ENCODE measurements at regions of chr7 and their contacts with region 1.

Region 1: DNA sequence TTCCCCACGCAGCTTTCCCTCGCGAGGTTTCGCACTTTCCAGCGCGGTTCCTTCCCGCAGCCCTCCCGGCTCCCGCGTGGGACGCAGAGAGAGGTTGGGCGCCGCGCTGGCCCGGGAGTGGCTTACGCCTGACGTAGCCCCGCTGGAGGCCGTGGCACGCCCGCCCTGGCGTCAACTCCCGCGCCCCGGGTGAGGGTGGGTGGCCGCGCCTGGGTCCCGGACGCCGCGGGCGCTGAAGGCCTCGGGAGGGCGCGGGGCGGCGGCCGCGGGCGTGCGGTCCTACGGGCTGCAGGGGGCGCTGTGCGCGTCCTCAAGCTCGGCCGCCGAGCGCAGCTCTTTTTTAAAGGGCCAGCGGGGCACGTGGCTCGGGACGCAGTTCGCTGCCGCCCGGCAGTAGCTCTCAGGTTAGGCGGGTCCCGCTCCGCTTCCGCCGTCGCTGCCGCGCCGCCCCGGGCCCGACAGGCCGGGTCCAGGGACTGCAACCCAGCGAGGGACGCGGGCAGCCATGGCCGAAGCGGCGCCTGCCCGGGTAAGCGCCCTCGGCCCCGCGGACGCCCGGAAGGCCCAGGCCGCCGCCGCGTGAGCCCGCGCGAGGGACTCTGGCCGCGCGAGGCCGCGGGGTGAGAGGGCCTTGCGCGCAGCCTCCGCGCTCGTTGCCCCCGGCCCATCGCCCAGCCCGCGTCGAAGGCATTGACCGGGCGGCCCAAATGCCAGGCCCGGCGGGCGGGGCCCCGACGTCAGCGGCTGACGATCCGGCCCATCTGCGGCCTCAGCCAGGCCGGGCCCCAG is at the start of gene ZNF783:
- DNase-seq: peak; percentile 86 to 94
- ATAC-seq: peak; percentile 90 to 94
- H3K4me3 ChIP-seq: peak within 1 kb of the TSS; percentile 57
- H3K27ac ChIP-seq: peak within 1 kb of the TSS; percentile 88 to 95
- H3K4me1 ChIP-seq: peaks cover 15% of the 10 kb centered on the region; the same call in 2 of the 3 replicates
- CTCF ChIP-seq: peak; percentile 92
- EP300 ChIP-seq: no peak
- POLR2A ChIP-seq: peak; percentile 47
- RAD21 ChIP-seq: peak; percentile 36 to 50; a peak in 4 of 5 replicates
- polyA plus RNA-seq, gene ZNF783: 8.0 and 9.9 TPM in 2 replicates

Region 2: DNA sequence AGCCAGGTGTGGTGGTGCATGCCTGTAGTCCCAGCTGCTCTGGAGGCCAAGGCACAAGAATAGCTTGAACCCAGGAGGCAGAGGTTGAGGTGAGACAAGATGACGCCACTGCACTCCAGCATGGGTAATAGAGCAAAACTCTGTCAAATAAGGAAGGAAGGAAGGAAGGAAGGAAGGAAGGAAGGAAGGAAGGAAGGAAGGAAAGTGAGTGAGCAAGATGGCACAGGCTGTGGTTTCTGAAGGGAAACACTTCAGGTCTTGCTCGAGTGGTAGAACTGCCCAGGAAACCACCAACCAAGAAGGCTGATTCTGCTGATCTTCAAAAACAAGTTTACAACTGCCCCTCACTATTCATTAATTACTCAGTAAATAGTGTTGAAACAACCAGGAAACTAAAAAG is 423.1 kb before region 1 on chr7:
- CTCF ChIA-PET with region 1: no interaction called
- POLR2A ChIA-PET with region 1: no interaction called
- DNase-seq: no peak
- ATAC-seq: no peak
- H3K4me3 ChIP-seq: no peak overlapping the region
- H3K27ac ChIP-seq: no peak overlapping the region
- H3K4me1 ChIP-seq: peaks cover 10% of the 10 kb centered on the region
- CTCF ChIP-seq: no peak
- EP300 ChIP-seq: no peak
- POLR2A ChIP-seq: no peak
- RAD21 ChIP-seq: no peak

Region 3: DNA sequence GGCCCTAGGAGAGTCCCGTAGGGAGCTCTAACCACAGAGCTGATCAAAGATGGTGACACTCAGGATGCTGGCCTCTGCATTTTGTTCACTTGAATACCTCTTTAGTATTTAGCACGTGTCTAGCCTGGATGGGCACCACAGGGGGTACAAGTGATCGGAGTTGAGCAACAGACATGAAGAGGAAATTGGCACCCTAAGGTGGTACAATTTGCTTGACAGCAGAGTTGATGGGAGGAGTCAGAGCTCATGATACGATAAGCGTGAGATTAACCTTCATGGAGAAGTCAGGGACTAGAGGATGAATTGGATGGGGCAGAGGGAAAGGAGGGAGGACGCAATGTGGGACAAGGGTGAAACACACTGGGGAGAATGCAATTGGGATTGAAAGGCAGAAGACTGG is 32.5 kb before region 1 on chr7:
- CTCF ChIA-PET with region 1: interaction called, 11 read pairs
- POLR2A ChIA-PET with region 1: interaction called, 4 read pairs
- DNase-seq: no peak
- ATAC-seq: peak; percentile 8 to 18; a peak in 3 of 6 replicates
- H3K4me3 ChIP-seq: no peak overlapping the region
- H3K27ac ChIP-seq: no peak overlapping the region
- H3K4me1 ChIP-seq: peaks cover 9% of the 10 kb centered on the region
- CTCF ChIP-seq: no peak
- EP300 ChIP-seq: no peak
- POLR2A ChIP-seq: no peak
- RAD21 ChIP-seq: no peak

Region 4: GRCh38 chr7:149239345-149240191 is 22.5 kb before region 1 on chr7 and contains the start of gene ZNF212:
- CTCF ChIA-PET with region 1: interaction called, 13 read pairs
- POLR2A ChIA-PET with region 1: interaction called, 4 read pairs
- DNase-seq: peak; percentile 93 to 99
- ATAC-seq: peak; percentile 99 to 100
- H3K4me3 ChIP-seq: peak within 1 kb of the TSS; percentile 74
- H3K27ac ChIP-seq: peak within 1 kb of the TSS; percentile 79 to 93
- H3K4me1 ChIP-seq: peaks cover 22% of the 10 kb centered on the region
- CTCF ChIP-seq: peak; percentile 77
- EP300 ChIP-seq: no peak
- POLR2A ChIP-seq: 0 out of 2 replicates have a peak, but pooled peaks have one; percentile 10
- RAD21 ChIP-seq: peak in 1 of 2 experiments; percentile 38; a peak in 3 of 5 replicates
- polyA plus RNA-seq, gene ZNF212: 5.3 and 5.5 TPM in 2 replicates

Region 5: GRCh38 chr7:149245244-149245643 is 16.8 kb before region 1 on chr7:
- CTCF ChIA-PET with region 1: interaction called, 78 read pairs
- POLR2A ChIA-PET with region 1: interaction called, 4 read pairs
- DNase-seq: no peak
- ATAC-seq: no peak; a peak in 1 of 6 replicates
- H3K4me3 ChIP-seq: no peak overlapping the region
- H3K27ac ChIP-seq: no peak overlapping the region
- H3K4me1 ChIP-seq: peaks cover 6% of the 10 kb centered on the region; the same call in 1 of the 3 replicates
- CTCF ChIP-seq: no peak
- EP300 ChIP-seq: no peak
- POLR2A ChIP-seq: no peak
- RAD21 ChIP-seq: no peak

Region 6: GRCh38 chr7:149284850-149285626 is 23.0 kb after region 1 on chr7:
- CTCF ChIA-PET with region 1: interaction called, 14 read pairs
- POLR2A ChIA-PET with region 1: interaction called, 12 read pairs
- DNase-seq: peak; percentile 83 to 93
- ATAC-seq: peak; percentile 83 to 96
- H3K4me3 ChIP-seq: peak overlapping the region; percentile 56
- H3K27ac ChIP-seq: peak overlapping the region; percentile 40 to 83; a peak in 5 of 6 replicates
- H3K4me1 ChIP-seq: no peaks in the 10 kb centered on the region
- CTCF ChIP-seq: no peak
- EP300 ChIP-seq: no peak
- POLR2A ChIP-seq: peak; percentile 36; the same call in 1 of the 2 replicates
- RAD21 ChIP-seq: no peak

Region 7: GRCh38 chr7:149310113-149310836 is 48.3 kb after region 1 on chr7:
- CTCF ChIA-PET with region 1: interaction called, 8 read pairs
- POLR2A ChIA-PET with region 1: interaction called, 13 read pairs
- DNase-seq: peak; percentile 87 to 88
- ATAC-seq: peak; percentile 95
- H3K4me3 ChIP-seq: no peak overlapping the region
- H3K27ac ChIP-seq: no peak overlapping the region
- H3K4me1 ChIP-seq: no peaks in the 10 kb centered on the region
- CTCF ChIP-seq: peak; percentile 55
- EP300 ChIP-seq: no peak
- POLR2A ChIP-seq: no peak
- RAD21 ChIP-seq: peak; percentile 51 to 66

Measured in A549 (cell line).